ENCODE measurements at regions of chr10 and their contacts with region 1.

Region 1: DNA sequence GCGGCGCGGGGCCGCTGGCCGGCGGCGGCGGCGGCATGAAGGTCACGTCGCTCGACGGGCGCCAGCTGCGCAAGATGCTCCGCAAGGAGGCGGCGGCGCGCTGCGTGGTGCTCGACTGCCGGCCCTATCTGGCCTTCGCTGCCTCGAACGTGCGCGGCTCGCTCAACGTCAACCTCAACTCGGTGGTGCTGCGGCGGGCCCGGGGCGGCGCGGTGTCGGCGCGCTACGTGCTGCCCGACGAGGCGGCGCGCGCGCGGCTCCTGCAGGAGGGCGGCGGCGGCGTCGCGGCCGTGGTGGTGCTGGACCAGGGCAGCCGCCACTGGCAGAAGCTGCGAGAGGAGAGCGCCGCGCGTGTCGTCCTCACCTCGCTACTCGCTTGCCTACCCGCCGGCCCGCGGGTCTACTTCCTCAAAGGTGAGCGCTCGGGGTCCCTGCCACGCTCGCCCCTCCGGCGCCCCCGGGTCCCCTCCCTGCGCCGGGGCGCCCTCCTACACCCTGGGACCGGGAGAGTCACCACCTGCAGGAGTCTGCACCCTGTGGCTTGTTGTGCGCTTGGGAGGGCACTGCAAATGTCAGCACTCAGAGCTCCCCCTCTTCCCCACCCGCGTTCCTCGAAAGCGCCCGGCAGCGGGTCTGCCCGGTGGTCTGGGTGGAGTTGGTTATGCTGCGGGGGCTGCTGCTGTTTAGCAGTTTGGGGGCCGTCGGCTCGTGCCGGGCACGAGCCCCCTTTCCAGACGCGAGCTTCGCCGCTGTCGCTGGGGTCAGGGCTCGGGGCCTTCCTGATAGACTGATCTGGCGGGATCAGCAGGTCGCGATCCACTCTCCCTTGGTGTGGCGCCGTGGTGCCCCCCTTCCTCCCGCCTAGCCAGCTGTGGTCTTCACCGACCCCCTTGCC is 627 bp downstream of the DUSP5 start:
- DNase-seq: peak; percentile 51
- ATAC-seq: no peak; the same call in 1 of the 2 replicates
- H3K4me3 Mint-ChIP-seq: peak overlapping the region; percentile 89
- H3K27ac Mint-ChIP-seq: peak overlapping the region; percentile 54; the same call in 1 of the 2 replicates
- H3K4me1 Mint-ChIP-seq: peaks cover 75% of the 10 kb centered on the region
- H3K27me3 Mint-ChIP-seq: peaks cover 14% of the 10 kb centered on the region
- CTCF ChIP-seq: no peak

Region 2: DNA sequence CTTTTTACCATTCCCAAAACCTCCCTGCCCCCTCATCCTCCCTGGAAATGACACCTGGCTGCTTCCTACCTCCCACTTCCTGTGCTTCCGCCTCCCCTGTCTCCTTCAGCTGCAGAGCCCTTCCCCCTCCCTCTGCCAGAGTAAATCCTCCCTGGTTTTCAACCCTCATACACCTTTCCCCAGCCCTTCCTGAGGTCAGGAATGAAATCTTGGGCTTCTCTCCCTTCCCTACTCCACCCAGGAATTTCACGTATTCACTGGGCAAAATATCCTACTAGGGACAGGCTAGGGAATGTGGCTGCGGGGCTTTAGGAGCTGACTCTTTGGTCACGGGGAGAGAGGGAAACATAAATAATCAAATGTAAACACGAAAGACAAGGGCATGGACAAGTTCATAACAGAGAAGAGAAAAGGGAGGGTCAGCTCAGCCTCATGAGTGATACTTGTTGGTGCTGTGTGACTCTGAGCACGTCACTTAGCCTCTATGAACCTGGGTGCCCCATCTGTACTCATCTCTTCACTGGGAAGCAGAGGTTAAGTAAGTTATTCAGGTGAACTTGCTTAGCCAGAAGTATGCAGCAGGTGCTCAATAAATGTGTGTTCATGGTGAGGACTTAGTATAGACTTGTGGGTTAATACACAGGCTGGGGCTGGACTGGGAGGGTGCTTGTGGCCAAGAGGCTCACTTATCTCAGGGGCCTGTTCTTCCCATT is 10.8 kb before region 1 on chr10:
- CTCF ChIA-PET with region 1: interaction called, 10 read pairs
- POLR2A ChIA-PET with region 1: interaction called, 4 read pairs
- DNase-seq: peak; percentile 53
- ATAC-seq: peak; percentile 87
- H3K4me3 Mint-ChIP-seq: peak overlapping the region; percentile 51
- H3K27ac Mint-ChIP-seq: peak overlapping the region; percentile 97
- H3K4me1 Mint-ChIP-seq: peaks cover 65% of the 10 kb centered on the region
- H3K27me3 Mint-ChIP-seq: no peaks in the 10 kb centered on the region
- CTCF ChIP-seq: no peak

Region 3: DNA sequence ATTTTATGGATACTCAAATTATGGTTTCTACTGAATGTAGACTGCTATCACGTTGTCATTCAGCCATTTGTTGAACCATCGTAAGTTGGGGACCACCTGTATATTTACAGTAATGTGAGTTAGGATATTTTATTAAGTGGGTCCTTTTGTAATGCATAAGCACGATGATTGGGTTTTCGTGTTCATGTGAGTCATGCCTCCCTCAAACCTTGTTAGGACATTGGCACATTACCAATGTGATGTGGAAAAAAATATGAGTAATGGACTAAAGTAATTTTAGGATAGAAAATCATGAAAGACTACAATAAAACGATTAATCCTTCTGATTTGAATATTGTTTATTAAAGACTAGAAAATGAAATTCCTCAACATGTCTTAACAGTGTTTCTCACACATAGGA is 77.9 kb after region 1 on chr10:
- CTCF ChIA-PET with region 1: no interaction called
- POLR2A ChIA-PET with region 1: no interaction called
- DNase-seq: no peak
- ATAC-seq: no peak
- H3K4me3 Mint-ChIP-seq: no peak overlapping the region
- H3K27ac Mint-ChIP-seq: no peak overlapping the region; the same call in 1 of the 2 replicates
- H3K4me1 Mint-ChIP-seq: peaks cover 5% of the 10 kb centered on the region
- H3K27me3 Mint-ChIP-seq: no peaks in the 10 kb centered on the region
- CTCF ChIP-seq: no peak